HEK293 (cell line): ENCODE measurements at regions of chr15 and their contacts with region 1.

Region 1: DNA sequence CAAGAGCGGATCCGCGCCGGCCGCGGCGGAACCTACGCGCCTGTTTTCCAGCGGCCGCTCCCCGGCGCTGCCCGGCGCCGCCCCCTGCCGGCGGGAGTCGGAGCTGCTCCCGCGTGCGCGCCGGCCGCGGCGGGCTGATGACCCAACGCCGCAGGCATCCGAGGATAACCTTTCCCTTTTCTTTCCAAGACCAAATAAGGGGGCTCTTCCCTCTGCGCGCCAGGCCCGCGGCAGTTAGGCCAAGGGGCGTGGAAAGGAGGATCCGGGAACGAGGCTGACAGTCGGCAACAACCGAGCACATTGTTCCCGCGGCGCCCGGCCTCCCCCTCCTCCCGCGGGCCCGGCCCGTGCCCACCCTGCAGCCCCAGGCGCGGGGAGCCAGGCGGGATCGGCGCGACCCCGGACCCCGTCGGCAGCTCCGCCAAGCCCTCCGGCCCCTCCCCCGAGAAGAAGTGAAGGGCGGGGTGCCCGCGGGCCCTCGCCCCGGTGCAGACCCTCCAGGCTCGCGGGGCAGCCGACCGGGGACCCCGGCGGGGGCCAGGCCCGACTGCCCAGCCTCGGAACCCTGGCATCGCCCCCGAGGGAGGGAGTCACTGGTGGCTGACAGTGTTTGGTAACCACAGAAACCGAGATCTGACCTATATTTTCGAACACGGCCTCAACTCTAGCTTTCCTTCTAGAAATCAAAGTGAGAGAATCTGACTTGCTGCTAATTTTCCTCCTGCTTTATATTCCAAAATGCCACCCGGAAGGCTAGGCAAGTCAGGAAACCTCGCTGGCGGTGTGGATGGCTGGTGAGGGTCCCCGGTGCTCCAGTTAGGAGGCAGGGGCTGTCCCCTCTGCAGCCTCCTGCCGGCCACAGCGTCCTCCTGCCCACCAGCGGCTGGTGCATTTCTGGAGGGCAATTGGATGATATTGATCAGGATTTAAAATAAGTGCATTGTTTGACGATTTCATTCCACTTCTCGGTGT is 45.6 kb upstream of the SYNM start:
- H3K4me3 ChIP-seq: peak overlapping the region; percentile 50
- H3K27ac ChIP-seq: peak overlapping the region; percentile 59; the same call in 1 of the 2 replicates
- H3K4me1 ChIP-seq: no peaks in the 10 kb centered on the region; the same call in 1 of the 2 replicates
- CTCF ChIP-seq: no peak

Region 2: DNA sequence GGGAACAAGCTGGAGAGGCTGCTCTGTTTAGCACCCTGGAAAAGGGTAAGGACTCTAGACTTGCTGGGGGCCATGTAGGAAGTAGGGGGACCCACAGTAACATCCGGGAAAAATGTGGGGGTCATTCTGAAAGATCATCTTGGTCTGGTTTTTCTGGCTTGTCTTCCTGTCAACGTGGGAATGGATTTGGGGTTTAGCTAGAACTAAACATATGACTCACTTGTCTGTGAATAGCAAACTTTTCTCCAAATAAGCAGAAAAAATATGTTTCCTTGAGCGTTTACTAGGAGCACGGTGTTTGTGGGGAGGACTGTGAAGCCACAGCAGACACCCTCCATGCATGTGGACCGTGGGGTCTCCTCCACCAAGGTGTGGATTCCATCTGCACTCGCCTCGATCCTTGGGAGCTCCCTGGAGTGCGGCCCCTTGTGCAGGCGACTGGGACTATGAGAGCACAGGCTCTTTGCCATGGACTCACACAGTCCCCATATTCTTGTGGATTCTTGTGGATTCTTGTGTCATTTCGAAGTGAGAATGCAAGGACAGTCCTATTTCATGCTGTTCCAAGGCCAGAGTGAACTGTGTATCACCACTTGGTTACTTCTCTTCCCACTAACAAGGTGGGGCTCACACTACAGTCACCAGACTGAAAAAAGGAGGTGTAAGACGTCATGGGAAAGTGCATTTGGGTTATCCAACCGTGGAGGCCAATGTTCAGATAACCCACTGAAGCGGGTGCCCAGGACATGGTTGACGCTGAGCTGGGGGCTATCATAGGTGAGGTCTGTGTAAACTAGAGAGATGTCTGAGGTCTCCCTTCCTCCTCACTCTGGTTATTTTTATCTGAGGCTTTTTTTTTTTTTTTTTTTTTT is 77.2 kb before region 1 on chr15:
- CTCF ChIA-PET with region 1: interaction called, 3 read pairs
- POLR2A ChIA-PET with region 1: interaction called, 12 read pairs
- H3K4me3 ChIP-seq: no peak overlapping the region
- H3K27ac ChIP-seq: no peak overlapping the region; the same call in 1 of the 2 replicates
- H3K4me1 ChIP-seq: peaks cover 11% of the 10 kb centered on the region
- CTCF ChIP-seq: no peak

Region 3: GRCh38 chr15:99070208-99070607 is 10.9 kb after region 1 on chr15:
- CTCF ChIA-PET with region 1: interaction called, 26 read pairs
- POLR2A ChIA-PET with region 1: interaction called, 10 read pairs
- H3K4me3 ChIP-seq: no peak overlapping the region
- H3K27ac ChIP-seq: no peak overlapping the region
- H3K4me1 ChIP-seq: no peaks in the 10 kb centered on the region
- CTCF ChIP-seq: no peak

Region 4: DNA sequence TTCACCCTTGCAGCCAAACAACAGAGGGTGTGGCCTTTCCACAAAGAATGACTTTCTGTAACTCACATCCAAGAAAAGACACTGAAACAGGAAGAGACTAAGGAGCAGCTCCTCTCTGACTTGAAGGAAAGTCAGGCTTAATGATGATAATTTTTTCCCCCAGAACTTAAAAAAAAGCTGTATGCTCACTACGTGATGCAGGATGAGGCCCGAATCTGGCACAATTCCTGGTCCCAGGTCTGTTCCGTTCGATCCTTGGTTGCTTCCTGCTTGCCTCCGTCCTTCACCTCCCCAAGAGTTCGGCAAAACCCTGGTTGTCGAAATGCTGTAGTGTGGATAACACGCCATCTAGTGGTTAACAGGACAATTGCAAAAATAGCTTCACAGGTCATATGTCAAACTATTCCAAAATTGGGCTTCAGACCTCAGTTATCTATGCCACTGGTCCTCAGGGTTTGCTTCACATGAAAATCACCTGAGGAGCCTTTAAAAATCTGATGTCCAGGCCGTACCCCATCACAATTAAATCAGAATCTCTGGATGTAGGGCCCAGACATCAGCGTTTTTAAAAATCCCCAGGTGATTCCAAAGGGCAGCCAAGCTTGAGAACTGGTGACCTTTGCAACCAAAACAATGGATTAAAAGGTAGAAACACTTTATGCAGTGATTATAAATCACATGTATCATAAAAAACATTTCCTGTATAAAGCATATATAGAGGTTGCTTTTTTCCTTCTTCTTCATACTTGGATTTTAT is 17.4 kb after region 1 on chr15:
- CTCF ChIA-PET with region 1: interaction called, 26 read pairs
- POLR2A ChIA-PET with region 1: interaction called, 10 read pairs
- H3K4me3 ChIP-seq: peak overlapping the region; percentile 1; the same call in 1 of the 2 replicates
- H3K27ac ChIP-seq: no peak overlapping the region
- H3K4me1 ChIP-seq: no peaks in the 10 kb centered on the region
- CTCF ChIP-seq: peak; percentile 70; the same call in 1 of the 2 replicates

Region 5: GRCh38 chr15:99305761-99306505 is 246.6 kb after region 1 on chr15:
- CTCF ChIA-PET with region 1: no interaction called
- POLR2A ChIA-PET with region 1: no interaction called
- H3K4me3 ChIP-seq: no peak overlapping the region; the same call in 1 of the 2 replicates
- H3K27ac ChIP-seq: peak overlapping the region; percentile 75; the same call in 1 of the 2 replicates
- H3K4me1 ChIP-seq: peaks cover 33% of the 10 kb centered on the region
- CTCF ChIP-seq: no peak